PC-9 (cell line): ENCODE measurements at regions of chr3 and their contacts with region 1.

Region 1: DNA sequence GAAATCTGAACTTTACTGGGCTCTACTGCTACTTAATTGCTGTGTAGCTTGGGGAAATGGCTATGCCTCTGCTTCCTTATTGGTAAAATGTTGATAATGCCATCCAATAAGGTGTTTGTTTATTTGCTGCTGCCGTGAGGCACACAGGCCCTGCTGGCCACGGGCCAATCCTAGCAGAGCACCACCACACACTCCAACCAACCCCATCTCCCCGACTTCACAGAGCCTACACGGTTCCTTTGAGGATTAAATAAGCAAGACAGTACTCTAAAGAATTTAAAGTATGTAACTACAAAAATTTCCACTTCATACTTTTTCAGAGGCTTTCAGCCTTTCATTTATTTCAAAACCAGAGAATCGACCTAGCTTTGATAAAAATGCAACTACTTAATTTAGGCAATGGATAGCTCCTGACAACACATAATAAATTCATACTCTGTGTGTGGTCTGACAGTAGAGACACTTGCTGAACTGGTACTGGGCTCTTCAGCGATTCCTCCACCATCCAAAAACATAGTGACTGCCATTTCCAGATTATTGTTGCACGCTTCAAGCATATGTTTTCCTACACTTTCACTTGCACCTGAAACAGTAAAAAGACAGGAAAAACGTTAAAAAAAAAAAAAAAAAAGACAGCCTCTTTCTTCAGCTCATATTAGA is 25.3 kb downstream of the UBXN7 start:
- DNase-seq: no peak
- H3K4me3 ChIP-seq: no peak overlapping the region
- H3K27ac ChIP-seq: no peak overlapping the region
- H3K4me1 ChIP-seq: no peaks in the 10 kb centered on the region
- H3K27me3 ChIP-seq: no peaks in the 10 kb centered on the region
- CTCF ChIP-seq: no peak

Region 2: GRCh38 chr3:195207731-195208585 is 1199.0 kb before region 1 on chr3:
- CTCF ChIA-PET with region 1: no interaction called
- POLR2A ChIA-PET with region 1: no interaction called
- intact Hi-C with region 1: no loop called
- DNase-seq: peak in 1 of 2 experiments; percentile 34
- H3K4me3 ChIP-seq: no peak overlapping the region
- H3K27ac ChIP-seq: no peak overlapping the region
- H3K4me1 ChIP-seq: 0 out of 2 replicates have a peak, but pooled peaks cover 9% of the 10 kb centered on the region
- H3K27me3 ChIP-seq: no peaks in the 10 kb centered on the region
- CTCF ChIP-seq: no peak

Region 3: DNA sequence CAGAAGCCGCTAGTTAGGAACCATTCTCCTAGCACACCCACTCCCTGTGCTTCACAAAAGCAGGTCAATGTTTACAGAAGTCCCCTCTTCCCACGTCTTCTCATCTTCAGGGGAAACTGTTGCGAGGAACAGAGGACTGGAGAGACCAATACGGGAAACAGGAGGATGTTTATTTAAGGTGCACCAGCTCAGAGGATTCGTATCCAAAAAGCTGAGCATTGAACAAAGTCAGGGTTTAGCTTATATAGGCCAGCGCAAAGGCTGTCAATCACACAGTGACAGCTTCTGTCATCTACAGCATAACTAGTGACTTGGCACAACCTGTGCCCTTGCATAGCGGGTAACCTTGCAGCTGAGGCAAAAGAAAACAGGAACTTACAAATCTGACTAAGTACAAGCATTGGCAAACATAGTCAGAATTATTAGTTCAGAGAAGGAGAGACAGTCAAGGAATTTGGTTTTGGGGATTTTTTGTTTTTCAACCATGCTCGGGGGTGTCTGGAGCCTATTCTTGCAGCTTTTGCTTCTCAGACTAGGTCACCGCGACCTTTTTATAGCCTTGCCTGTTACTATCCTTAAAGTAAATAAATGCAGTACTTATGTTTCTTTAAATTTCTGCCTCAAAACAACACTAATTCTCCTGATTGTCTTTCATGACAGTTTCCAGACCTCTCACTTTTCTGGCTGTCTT is 257.0 kb before region 1 on chr3:
- CTCF ChIA-PET with region 1: no interaction called
- POLR2A ChIA-PET with region 1: interaction called, 12 read pairs
- intact Hi-C with region 1: no loop called
- DNase-seq: no peak
- H3K4me3 ChIP-seq: no peak overlapping the region
- H3K27ac ChIP-seq: no peak overlapping the region
- H3K4me1 ChIP-seq: peaks cover 28% of the 10 kb centered on the region
- H3K27me3 ChIP-seq: no peaks in the 10 kb centered on the region
- CTCF ChIP-seq: no peak

Region 4: GRCh38 chr3:196365736-196366135 is 41.2 kb before region 1 on chr3:
- CTCF ChIA-PET with region 1: no interaction called
- POLR2A ChIA-PET with region 1: no interaction called
- intact Hi-C with region 1: loop called (anchors 5 kb)
- DNase-seq: no peak
- H3K4me3 ChIP-seq: no peak overlapping the region
- H3K27ac ChIP-seq: no peak overlapping the region
- H3K4me1 ChIP-seq: no peaks in the 10 kb centered on the region
- H3K27me3 ChIP-seq: no peaks in the 10 kb centered on the region
- CTCF ChIP-seq: no peak

Region 5: DNA sequence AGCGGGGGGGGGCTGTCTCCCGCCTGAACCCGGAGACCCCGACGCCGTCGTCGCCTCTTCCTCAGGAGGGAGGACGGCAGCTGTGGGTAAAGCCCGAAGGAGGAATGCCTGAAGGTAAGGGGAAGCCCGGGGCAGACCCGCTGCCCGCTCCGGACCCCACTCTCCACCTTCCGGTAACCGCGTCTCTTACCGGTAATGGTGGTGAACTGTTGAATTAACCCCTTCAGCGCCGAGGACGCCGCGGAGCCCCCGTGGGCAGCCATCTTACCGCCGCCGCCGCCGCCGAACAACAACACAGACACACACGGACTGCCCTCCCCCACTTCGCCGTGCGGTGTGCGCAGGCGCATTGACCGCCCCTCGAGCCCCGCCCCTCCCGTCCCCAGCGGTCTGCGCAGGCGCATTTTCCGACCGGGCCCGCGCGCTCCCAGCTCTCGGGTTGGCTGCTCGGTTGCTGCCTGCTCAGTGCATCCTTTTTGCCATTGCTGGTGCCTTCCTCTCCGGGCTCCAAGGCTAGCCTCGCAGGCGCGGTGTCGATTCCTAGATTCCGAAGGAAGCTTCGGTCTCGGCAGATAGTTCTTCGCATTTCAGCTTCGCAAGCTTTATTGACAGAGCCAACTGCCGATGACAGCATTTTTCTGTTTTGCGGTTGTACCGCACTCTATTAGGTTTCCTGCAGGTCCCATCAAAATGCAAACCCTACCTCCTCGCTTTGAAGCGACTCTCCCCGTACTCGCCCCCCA is 25.4 kb after region 1 on chr3 and contains the start of gene UBXN7:
- CTCF ChIA-PET with region 1: interaction called, 12 read pairs
- POLR2A ChIA-PET with region 1: interaction called, 4 read pairs
- intact Hi-C with region 1: no loop called
- DNase-seq: peak; percentile 82 to 98
- H3K4me3 ChIP-seq: peak within 1 kb of the TSS; percentile 80
- H3K27ac ChIP-seq: peak within 1 kb of the TSS; percentile 47
- H3K4me1 ChIP-seq: peaks cover 13% of the 10 kb centered on the region
- H3K27me3 ChIP-seq: no peaks in the 10 kb centered on the region
- CTCF ChIP-seq: no peak
- total RNA-seq, gene UBXN7: 68.6 and 125 TPM in 2 replicates